ENCODE measurements at regions of chr12 and their contacts with region 1.

Region 1: DNA sequence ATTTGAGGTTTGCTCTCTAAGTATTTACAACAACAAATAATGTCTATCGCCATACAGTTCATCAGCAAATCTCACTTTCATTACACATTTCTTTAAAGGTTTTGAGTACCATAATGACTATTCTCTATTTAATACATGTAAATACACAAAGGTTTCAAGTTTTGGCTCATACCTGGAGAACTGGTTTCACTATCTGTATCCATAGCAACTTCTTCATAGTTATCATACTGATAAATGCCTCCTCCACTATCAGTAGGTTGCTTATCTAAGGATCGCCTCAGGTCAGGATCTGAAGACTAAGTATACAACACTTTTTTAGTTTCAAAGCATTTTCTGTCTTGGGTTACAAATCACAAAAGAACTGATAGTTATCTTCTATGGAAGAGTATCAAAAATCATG is 21.4 kb downstream of the ZFC3H1 start:
- DNase-seq: no peak
- H3K4me3 Mint-ChIP-seq: no peak overlapping the region
- H3K27ac Mint-ChIP-seq: peak overlapping the region; percentile 76
- H3K4me1 Mint-ChIP-seq: peaks cover 39% of the 10 kb centered on the region
- H3K27me3 Mint-ChIP-seq: no peaks in the 10 kb centered on the region

Region 2: DNA sequence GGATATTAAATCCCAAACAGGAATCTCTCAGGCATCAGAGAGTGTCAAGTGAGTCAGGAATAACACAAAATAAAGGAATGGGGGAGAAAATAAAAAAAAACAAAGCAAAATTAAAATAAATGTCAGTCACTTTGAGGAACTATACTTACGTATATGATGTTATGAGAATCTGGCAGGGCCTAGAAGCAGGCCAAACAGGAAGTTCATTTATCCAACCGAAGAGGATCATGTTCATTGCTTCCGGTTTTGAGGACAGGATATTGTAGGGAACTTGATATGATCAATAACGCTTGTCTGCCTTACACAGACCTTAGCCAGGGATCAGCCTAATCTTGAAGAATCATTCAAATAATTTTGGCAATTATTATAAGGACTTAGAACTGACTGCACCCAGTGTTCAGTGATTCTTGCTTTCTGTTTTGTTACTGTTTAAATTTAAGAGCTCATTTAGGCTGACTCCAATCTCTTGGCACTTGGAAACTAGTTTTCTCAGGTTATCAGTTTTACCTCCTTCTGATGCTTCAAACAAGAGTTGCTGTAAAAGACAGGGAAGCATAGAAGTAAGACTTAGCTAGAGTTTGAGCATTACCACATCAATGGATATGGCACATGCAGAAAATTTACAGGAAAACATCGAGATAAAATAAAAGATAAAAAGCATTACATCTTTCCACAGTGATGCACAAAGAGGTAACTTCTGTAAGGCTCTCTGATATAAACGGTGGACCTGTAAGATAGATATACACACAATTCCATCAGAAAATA is 32.1 kb before region 1 on chr12:
- intact Hi-C with region 1: loop called (anchors 5 kb)
- DNase-seq: no peak
- H3K4me3 Mint-ChIP-seq: no peak overlapping the region
- H3K27ac Mint-ChIP-seq: peak overlapping the region; percentile 6
- H3K4me1 Mint-ChIP-seq: peaks cover 20% of the 10 kb centered on the region
- H3K27me3 Mint-ChIP-seq: no peaks in the 10 kb centered on the region

Region 3: DNA sequence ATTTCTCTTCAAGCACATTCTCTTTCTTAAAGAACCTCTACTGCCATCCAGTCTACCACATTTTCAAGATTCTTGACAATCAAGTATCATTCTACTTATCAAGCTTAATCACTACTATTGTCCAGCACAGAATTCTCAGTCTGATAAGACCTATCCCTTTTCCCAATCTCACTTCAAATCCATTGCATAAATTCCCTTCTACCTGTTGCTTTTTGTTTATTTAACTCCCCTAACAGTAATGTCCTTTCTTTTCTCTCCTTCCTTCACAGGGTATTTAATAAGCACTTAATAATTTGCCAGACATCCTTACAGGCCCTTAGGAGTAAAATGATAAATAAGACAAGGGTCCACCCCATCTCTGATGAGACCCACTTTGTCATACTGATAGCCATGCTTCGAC is 20.3 kb before region 1 on chr12:
- intact Hi-C with region 1: no loop called
- DNase-seq: no peak
- H3K4me3 Mint-ChIP-seq: no peak overlapping the region
- H3K27ac Mint-ChIP-seq: no peak overlapping the region
- H3K4me1 Mint-ChIP-seq: peaks cover 11% of the 10 kb centered on the region
- H3K27me3 Mint-ChIP-seq: no peaks in the 10 kb centered on the region

Region 4: DNA sequence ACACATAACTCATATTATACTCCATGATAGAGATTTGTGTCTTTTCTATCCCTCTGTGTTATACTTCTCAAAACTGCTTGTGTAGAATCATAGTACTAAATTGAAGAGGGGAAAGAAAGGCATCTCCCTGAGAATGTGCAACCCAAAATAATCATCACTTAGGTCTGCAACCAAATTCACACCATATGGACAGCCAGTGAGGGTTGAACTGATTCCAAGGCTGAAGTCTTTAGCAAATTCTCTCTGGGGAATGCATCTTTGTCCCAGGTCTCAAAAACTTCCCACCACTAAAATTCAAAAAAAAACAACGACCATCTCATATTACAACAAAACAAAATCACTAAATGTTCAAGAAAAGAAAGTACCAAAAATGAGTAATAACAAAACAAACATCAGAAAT is 10.4 kb after region 1 on chr12:
- intact Hi-C with region 1: loop called (anchors 1 kb)
- DNase-seq: no peak
- H3K4me3 Mint-ChIP-seq: no peak overlapping the region
- H3K27ac Mint-ChIP-seq: no peak overlapping the region
- H3K4me1 Mint-ChIP-seq: peaks cover 31% of the 10 kb centered on the region
- H3K27me3 Mint-ChIP-seq: no peaks in the 10 kb centered on the region